Transverse colon (tissue), 4 donors: ENCODE measurements at regions of chr3 and their contacts with region 1.

Region 1: DNA sequence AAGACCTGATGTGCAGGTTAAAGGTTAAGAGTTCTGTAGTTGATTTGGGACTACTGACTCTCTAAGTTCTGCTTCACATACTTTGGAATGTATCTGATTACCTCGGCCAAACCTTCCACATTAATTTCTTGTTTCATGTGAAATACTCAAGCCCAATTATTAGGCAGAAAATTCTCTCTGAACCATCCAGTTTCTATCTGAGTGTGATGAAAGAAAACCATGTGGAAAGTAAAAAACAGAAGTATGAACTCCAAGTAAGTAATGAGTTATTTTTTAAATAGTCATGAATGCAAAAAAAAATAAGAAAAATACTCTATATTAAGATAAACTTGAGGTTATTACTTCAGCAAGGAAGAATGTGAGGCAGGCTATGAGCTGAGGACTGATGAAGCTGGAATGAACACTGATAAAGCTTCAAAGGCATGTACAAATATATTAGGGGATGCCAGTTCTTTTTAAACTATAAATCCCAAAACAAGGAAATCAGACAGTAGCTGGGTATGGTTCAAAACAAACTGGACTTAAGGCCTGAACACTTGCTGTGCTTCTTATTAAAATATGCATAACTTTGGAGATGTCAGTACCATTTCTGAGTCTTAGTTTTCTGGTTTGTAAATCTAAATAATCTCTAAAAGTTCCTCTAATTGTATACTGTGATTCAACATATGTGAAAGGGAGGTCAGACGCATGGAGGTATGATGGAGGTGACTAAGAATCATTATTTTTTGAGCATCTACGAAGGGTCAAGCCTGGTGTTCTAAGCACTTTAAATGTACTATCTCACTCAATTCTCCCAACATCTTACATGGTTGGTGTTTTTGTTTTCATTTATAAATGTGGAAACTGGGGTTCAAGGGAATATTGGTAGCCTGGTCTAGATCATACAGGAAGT is 59.6 kb downstream of the COL6A6 start:
- DNase-seq: no peak
- H3K4me3 ChIP-seq: no peak overlapping the region
- H3K27ac ChIP-seq: no peak overlapping the region
- H3K4me1 ChIP-seq: no peaks in the 10 kb centered on the region
- H3K27me3 ChIP-seq: no peaks in the 10 kb centered on the region
- CTCF ChIP-seq: no peak
- EP300 ChIP-seq: no peak
- POLR2A ChIP-seq: no peak

Region 2: DNA sequence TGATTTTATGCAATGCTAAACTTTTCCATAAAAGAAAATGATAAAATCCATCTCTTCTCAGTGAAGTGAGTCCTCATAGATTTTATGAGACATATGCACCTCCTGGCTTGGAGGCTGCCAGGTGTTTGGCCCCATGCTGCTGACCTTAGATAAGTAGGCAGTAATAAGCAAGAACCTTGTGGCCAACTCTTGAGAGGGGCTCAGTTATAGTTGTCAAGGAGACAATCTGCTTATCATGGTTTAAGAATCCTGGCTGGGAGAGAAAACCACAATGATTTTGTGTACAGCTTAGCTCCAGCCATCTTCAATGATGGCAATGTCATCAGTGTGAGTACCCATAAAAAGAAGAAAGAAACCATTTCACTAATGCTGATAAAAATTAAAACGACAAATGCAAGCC is 1206.1 kb after region 1 on chr3:
- in situ Hi-C with region 1: no loop called
- intact Hi-C with region 1: loop called (anchors 10 kb)
- DNase-seq: no peak
- H3K4me3 ChIP-seq: no peak overlapping the region
- H3K27ac ChIP-seq: no peak overlapping the region
- H3K4me1 ChIP-seq: no peaks in the 10 kb centered on the region
- H3K27me3 ChIP-seq: no peaks in the 10 kb centered on the region
- CTCF ChIP-seq: no peak
- EP300 ChIP-seq: no peak
- POLR2A ChIP-seq: no peak